HCT116 (cell line): ENCODE measurements at regions of chr20 and their contacts with region 1.

Region 1: GRCh38 chr20:20568604-20569205 is 143.7 kb downstream of the RALGAPA2 start:
- DNase-seq: no peak
- ATAC-seq: no peak
- H3K4me3 ChIP-seq: no peak overlapping the region
- H3K27ac ChIP-seq: no peak overlapping the region
- H3K4me1 ChIP-seq: no peaks in the 10 kb centered on the region
- H3K27me3 ChIP-seq: no peaks in the 10 kb centered on the region
- CTCF ChIP-seq: peak; percentile 61 to 75 (median 69)
- POLR2A ChIP-seq: no peak
- RAD21 ChIP-seq: peak; percentile 81

Region 2: GRCh38 chr20:20360464-20360863 is 208.2 kb before region 1 on chr20:
- CTCF ChIA-PET with region 1: no interaction called
- POLR2A ChIA-PET with region 1: no interaction called
- RAD21 ChIA-PET with region 1: no interaction called
- intact Hi-C with region 1: loop called (anchors 1 kb)
- DNase-seq: peak; percentile 40
- ATAC-seq: peak; percentile 96
- H3K4me3 ChIP-seq: no peak overlapping the region
- H3K27ac ChIP-seq: no peak overlapping the region
- H3K4me1 ChIP-seq: no peaks in the 10 kb centered on the region
- H3K27me3 ChIP-seq: peaks cover 19% of the 10 kb centered on the region
- CTCF ChIP-seq: peak; percentile 66 to 86 (median 77); a peak in 5 of 6 replicates
- POLR2A ChIP-seq: no peak
- RAD21 ChIP-seq: peak; percentile 62